ENCODE measurements at regions of chr22 and their contacts with region 1.

Region 1: GRCh38 chr22:39559454-39560105 is 11.0 kb upstream of the CACNA1I start:
- DNase-seq: no peak
- H3K4me3 Mint-ChIP-seq: no peak overlapping the region
- H3K27ac Mint-ChIP-seq: no peak overlapping the region
- H3K4me1 Mint-ChIP-seq: no peaks in the 10 kb centered on the region
- H3K27me3 Mint-ChIP-seq: peaks cover 31% of the 10 kb centered on the region

Region 2: DNA sequence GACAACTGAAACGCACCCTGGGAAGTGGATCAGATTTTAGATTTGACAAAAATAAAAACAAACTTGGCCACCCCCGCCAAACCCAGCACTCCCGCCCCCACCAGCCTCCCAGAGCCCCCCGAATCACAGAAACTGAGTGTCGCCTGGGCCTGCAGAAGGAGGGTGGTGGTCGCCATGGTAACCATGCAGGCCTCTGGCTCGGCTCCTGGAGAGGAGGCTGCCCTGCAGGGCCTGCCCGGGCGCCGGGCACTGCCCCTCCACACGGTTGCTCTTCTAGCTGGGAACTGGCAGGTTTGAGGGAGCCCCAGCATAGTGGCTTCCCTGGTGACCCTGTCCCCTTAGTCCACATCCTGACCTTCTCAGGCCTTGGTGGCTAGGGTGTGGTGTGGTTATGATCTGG is 30.3 kb after region 1 on chr22:
- intact Hi-C with region 1: no loop called
- DNase-seq: no peak
- H3K4me3 Mint-ChIP-seq: no peak overlapping the region
- H3K27ac Mint-ChIP-seq: no peak overlapping the region
- H3K4me1 Mint-ChIP-seq: no peaks in the 10 kb centered on the region
- H3K27me3 Mint-ChIP-seq: peaks cover 18% of the 10 kb centered on the region

Region 3: DNA sequence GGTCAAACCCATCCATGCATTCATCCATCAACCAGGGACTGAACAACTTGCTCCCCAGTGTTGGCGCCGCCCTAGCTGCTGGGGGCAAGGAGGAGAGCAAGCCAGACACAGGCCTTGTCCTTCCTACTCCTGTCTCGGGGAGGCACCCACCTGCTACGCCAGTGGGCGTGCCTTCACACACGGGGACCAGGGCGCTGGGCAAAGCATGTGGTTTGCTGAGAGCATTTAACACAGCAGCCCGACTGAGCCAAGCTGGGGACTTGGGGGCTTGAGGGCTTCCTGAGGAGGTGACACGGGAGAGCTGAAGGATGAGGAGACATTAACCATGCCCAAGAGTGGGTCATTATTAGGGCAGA is 41.6 kb after region 1 on chr22:
- intact Hi-C with region 1: loop called (anchors 5 kb)
- DNase-seq: no peak
- H3K4me3 Mint-ChIP-seq: no peak overlapping the region
- H3K27ac Mint-ChIP-seq: no peak overlapping the region
- H3K4me1 Mint-ChIP-seq: peaks cover 22% of the 10 kb centered on the region
- H3K27me3 Mint-ChIP-seq: peaks cover 26% of the 10 kb centered on the region